ENCODE measurements at regions of chr1 and their contacts with region 1.

Region 1: DNA sequence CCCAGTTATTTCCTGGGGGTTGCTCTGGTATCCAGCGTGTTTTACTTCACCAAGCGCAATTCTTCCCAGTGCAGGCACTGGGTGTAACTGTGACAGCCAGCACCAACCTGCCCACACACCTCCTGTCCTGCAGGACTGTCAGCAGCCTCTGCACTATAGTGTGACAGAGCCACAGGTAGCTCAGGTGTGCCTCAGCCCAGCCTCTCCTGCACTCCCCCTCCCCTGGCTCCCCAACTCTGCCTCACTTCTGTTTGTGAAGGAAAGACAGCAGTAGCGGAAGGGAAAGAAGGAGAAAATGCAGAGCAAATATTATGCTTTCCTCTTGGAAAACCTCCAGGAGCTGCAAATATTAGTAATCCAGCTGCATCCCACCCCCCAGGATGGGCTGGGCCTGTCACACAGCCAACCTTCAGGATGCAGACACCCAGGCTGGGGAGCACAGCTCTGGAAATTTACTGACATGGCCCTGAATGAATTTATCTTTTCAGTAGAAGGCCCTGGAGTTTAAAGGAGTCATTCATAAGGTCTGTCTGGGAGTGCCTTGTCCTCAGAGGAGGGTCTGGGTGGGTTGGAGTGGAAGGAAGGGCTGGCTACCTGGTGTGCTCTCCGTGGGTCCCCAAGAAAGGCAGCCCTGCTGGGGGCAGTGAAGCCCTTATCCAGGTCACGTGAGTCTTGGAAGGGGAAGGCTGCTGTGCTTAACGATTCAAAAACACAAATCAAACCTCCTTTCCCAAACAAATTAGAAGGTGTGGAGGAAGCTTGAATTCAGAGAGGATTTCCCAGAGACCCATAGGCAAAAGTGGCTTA is 20.9 kb downstream of the CAPN2 start:
- DNase-seq: no peak
- H3K4me3 Mint-ChIP-seq: no peak overlapping the region
- H3K27ac Mint-ChIP-seq: peak overlapping the region; percentile 74
- H3K4me1 Mint-ChIP-seq: peaks cover 60% of the 10 kb centered on the region
- H3K27me3 Mint-ChIP-seq: no peaks in the 10 kb centered on the region
- CTCF ChIP-seq: no peak

Region 2: GRCh38 chr1:223720928-223721591 is 12.1 kb before region 1 on chr1:
- CTCF ChIA-PET with region 1: interaction called, 13 read pairs
- POLR2A ChIA-PET with region 1: interaction called, 53 read pairs
- intact Hi-C with region 1: no loop called
- DNase-seq: peak; percentile 97
- H3K4me3 Mint-ChIP-seq: peak overlapping the region; percentile 3
- H3K27ac Mint-ChIP-seq: peak overlapping the region; percentile 82
- H3K4me1 Mint-ChIP-seq: peaks cover 67% of the 10 kb centered on the region
- H3K27me3 Mint-ChIP-seq: no peaks in the 10 kb centered on the region
- CTCF ChIP-seq: no peak

Region 3: DNA sequence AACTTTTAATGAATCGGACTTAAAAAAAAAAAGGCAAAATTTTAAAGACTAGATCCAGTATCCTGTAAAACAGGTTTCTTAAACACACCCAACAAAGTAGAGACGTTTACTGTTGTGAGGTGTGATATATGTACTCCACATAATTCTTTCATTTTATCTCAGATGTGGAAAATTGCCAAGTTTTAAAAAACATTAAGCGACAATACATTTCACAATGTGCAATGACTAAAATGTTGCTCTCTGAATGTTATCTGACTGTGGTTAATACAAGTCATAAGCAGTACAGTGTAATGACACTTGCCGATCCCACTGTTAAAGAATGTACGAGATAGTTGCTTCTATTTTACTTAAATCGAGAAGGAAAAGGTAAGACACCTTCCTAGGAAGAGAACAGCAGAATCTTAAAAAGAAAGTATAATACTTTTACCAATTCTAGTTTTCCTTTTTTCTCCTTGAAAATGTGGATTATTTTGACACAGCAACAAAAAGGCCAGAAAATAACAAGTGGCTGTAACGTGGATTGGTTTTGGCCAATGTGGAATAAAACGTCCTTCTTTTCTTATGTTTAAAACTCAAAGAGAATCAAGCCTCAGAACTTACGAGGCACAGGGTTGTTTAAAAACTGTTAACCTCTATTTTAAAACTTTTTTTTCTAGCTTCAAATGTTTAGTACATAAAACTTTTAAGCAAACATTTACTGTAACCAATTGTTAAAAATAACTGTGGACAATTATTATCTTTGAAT is 61.1 kb after region 1 on chr1:
- CTCF ChIA-PET with region 1: no interaction called
- POLR2A ChIA-PET with region 1: no interaction called
- intact Hi-C with region 1: no loop called
- DNase-seq: no peak
- H3K4me3 Mint-ChIP-seq: no peak overlapping the region
- H3K27ac Mint-ChIP-seq: no peak overlapping the region
- H3K4me1 Mint-ChIP-seq: no peaks in the 10 kb centered on the region
- H3K27me3 Mint-ChIP-seq: no peaks in the 10 kb centered on the region
- CTCF ChIP-seq: no peak

Region 4: DNA sequence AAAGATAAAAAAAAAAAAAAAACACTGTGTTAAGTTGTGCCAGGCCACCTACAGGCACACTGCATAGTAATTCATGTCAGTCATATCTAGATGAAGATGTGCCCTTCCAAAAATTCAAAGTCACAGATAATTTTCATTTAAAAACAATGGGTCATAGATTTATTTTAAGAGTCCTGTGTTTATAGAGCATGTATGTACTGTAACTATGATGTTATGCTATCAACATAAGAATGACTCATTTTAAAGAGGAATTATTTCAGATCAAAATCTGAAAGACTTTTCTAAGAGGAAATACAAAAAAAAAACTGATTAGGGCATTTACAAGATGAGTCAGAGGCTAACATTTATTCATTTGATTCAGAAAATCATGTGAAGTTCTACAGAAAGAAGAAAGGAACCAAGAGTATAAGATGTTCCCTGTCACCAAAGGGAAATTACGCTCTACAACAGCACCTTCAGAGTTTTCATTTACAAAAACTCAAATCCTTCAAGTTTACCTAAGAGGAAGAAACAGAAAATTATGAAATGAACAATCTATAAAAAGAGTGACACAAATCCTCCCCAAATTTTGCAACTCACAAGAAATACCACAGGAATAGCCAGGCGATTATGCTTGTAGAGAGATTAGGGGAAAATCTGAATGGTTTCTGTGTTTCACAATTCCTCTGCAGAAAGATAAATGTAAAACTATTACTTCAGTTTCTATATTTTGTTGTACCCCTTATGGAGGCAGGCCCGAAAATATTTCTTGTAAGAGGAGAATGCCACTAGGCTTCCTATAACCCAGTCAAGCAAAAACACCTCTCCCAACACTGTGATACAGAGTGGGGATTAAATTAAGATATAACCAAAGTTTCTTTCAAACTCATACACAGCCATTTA is 98.8 kb after region 1 on chr1:
- CTCF ChIA-PET with region 1: no interaction called
- POLR2A ChIA-PET with region 1: no interaction called
- intact Hi-C with region 1: no loop called
- DNase-seq: peak; percentile 59
- H3K4me3 Mint-ChIP-seq: no peak overlapping the region
- H3K27ac Mint-ChIP-seq: peak overlapping the region; percentile 80
- H3K4me1 Mint-ChIP-seq: peaks cover 27% of the 10 kb centered on the region
- H3K27me3 Mint-ChIP-seq: no peaks in the 10 kb centered on the region
- CTCF ChIP-seq: peak; percentile 13